Activated CD4-positive, alpha-beta T cell treated with anti-CD3 and anti-CD28 coated beads for 36 hours (primary cell): ENCODE measurements at regions of chr16 and their contacts with region 1.

Region 1: DNA sequence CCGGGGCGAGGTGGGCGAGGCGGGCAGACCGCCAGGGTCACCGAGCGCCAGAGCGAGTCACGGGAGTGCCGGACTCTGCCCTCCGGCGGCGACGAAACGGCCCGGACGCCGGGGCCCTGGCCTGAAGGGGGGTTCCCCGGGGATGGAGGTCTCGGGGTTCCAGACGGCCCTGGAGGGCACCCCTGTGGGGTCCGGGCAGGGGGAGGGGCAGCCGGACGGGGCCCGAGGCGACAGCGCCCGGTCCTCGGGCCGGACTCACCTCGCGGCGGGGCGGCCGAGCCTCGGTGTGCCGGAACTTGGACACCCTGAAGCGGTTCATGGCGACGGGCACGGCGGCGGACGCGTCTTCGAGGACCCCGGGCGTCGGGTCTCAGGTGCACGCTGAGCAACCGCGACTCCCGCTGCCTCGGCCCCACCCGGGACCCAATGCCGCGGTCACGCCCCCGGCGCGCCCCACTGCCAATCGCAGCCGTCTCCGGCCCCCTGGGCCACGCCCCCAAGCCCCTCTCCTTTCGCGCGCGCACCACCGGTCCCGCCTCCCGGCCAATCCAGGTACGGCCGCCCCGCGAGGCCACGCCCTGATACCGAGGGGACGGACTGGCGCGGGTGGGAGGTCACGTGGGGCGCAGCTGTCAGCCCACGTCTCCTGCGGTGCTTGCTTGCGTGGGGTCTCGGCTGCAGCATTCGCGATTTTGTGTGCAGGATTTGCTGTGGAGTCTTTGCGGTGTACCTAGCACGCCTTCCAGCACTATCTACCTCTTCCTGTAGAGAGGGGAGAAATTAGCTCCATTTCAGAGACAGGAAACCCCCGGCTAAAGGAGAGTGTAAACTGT is at the start of gene CORO7:
- DNase-seq: peak; percentile 98
- ATAC-seq: peak; percentile 81
- H3K4me3 Mint-ChIP-seq: peak within 1 kb of the TSS; percentile 86
- H3K27ac Mint-ChIP-seq: peak within 1 kb of the TSS; percentile 84
- H3K4me1 Mint-ChIP-seq: peaks cover 29% of the 10 kb centered on the region
- H3K27me3 Mint-ChIP-seq: no peaks in the 10 kb centered on the region
- total RNA-seq, gene CORO7: 65.0 to 67.1 TPM

Region 2: DNA sequence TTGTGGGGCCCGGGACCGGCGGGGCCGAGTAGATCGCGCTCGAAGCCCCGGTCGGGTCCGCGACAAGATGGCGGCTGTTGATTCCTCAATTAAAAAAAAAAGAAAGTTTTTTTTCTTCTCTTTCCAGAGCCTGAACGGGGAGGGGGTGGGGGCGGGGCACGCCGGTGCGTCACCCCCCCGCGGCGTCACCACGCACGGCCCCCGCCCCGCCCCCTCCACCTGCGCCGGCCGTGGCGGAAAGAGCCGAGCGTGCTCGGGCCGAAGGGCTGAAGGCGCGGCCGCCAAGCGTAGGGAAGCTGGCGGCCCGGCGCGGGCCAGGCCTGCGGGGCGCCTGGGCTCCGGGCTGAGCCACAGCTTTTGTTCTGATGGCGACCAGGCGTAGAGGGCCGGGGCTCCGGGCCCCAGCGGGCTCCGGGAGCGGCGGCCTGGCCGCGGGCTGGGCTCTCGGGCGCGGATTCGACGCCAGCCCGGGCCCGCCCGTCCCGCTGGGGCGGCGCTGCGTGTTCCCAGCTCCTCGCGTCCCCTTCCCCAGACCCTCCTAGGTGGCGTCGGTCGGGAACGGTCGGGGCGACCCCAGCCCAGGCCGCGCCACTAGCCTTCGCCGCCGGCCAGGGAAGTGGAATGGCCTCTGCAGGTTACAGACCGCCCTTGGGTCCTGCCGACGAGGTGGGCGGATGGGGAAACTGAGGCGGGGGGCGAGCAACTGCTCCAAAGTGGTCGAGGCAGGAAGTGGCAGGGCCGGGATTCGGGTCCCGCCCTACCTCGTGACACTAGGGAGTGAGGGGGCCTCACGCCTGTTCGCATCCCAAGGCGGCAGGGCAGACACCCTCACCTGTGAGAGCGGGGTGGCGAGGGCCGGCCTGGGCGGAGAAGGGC is 535.6 kb before region 1 on chr16 and contains the start of gene CREBBP:
- CTCF ChIA-PET with region 1: no interaction called
- POLR2A ChIA-PET with region 1: interaction called, 4 read pairs
- intact Hi-C with region 1: loop called in 1 of 2 experiments (anchors 1 kb)
- DNase-seq: peak; percentile 93
- ATAC-seq: peak; percentile 89
- H3K4me3 Mint-ChIP-seq: peak within 1 kb of the TSS; percentile 79
- H3K27ac Mint-ChIP-seq: peak within 1 kb of the TSS; percentile 69
- H3K4me1 Mint-ChIP-seq: peaks cover 36% of the 10 kb centered on the region
- H3K27me3 Mint-ChIP-seq: peaks cover 6% of the 10 kb centered on the region
- total RNA-seq, gene CREBBP: 28.1 to 37.4 TPM

Region 3: DNA sequence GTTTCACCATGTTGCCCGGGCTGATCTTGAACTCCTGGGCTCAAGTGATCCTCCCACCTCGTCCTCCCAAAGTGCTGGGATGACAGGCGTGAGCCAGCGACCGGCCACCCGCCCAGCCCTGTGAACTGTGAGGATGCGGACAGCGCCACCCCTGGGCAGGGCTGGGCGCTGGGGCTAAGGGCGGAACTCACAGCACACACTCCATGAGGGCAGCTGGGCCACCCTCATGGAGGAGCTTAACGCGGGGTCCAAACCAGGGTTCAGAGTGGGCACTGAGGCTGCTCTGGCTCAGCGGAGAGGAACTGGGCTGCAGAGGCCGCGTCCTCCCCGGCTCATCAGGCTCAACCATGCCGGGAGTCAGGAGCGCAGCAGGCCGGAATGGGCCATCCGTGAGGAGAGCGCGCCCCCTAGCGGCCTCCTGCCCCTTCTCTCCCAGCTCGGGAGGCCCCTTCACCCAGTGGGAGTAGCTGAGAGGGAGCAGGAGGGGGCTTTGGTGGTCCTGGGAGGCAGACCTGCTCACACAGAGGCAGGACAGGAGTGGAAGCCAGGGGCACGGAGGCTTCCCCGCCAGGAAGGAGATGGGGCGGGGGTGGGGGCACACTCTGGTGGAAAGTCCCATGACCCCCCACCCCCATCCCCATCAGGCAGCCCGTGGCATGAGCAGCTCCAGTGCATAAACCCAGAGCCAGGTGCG is 13.8 kb before region 1 on chr16:
- CTCF ChIA-PET with region 1: interaction called, 45 read pairs
- POLR2A ChIA-PET with region 1: interaction called, 5 read pairs
- intact Hi-C with region 1: no loop called
- DNase-seq: peak; percentile 84
- ATAC-seq: peak; percentile 82
- H3K4me3 Mint-ChIP-seq: no peak overlapping the region
- H3K27ac Mint-ChIP-seq: no peak overlapping the region
- H3K4me1 Mint-ChIP-seq: no peaks in the 10 kb centered on the region
- H3K27me3 Mint-ChIP-seq: no peaks in the 10 kb centered on the region

Region 4: GRCh38 chr16:4802659-4803287 is 386.4 kb after region 1 on chr16:
- CTCF ChIA-PET with region 1: no interaction called
- POLR2A ChIA-PET with region 1: no interaction called
- intact Hi-C with region 1: loop called in 1 of 2 experiments (anchors 1 kb)
- DNase-seq: peak; percentile 92
- ATAC-seq: peak; percentile 98
- H3K4me3 Mint-ChIP-seq: peak overlapping the region; percentile 74
- H3K27ac Mint-ChIP-seq: peak overlapping the region; percentile 58
- H3K4me1 Mint-ChIP-seq: peaks cover 14% of the 10 kb centered on the region
- H3K27me3 Mint-ChIP-seq: no peaks in the 10 kb centered on the region

Region 5: GRCh38 chr16:4957720-4958509 is 541.5 kb after region 1 on chr16 and contains the start of gene SEC14L5:
- CTCF ChIA-PET with region 1: no interaction called
- POLR2A ChIA-PET with region 1: no interaction called
- intact Hi-C with region 1: loop called in 1 of 2 experiments (anchors 1 kb)
- DNase-seq: peak; percentile 98
- ATAC-seq: peak; percentile 95
- H3K4me3 Mint-ChIP-seq: peak within 1 kb of the TSS; percentile 75
- H3K27ac Mint-ChIP-seq: peak within 1 kb of the TSS; percentile 1
- H3K4me1 Mint-ChIP-seq: peaks cover 12% of the 10 kb centered on the region
- H3K27me3 Mint-ChIP-seq: peaks cover 33% of the 10 kb centered on the region
- total RNA-seq, gene SEC14L5: 0.09 to 0.28 TPM